ENCODE measurements at regions of chr5 and their contacts with region 1.

Region 1: GRCh38 chr5:78359831-78360673 is at the start of gene SCAMP1:
- DNase-seq: peak; percentile 92
- ATAC-seq: peak; percentile 92
- H3K4me3 Mint-ChIP-seq: peak within 1 kb of the TSS; percentile 81
- H3K27ac Mint-ChIP-seq: peak within 1 kb of the TSS; percentile 98
- H3K4me1 Mint-ChIP-seq: peaks cover 34% of the 10 kb centered on the region
- H3K27me3 Mint-ChIP-seq: no peaks in the 10 kb centered on the region
- CTCF ChIP-seq: no peak
- total RNA-seq, gene SCAMP1: 13.6 to 14.8 TPM

Region 2: DNA sequence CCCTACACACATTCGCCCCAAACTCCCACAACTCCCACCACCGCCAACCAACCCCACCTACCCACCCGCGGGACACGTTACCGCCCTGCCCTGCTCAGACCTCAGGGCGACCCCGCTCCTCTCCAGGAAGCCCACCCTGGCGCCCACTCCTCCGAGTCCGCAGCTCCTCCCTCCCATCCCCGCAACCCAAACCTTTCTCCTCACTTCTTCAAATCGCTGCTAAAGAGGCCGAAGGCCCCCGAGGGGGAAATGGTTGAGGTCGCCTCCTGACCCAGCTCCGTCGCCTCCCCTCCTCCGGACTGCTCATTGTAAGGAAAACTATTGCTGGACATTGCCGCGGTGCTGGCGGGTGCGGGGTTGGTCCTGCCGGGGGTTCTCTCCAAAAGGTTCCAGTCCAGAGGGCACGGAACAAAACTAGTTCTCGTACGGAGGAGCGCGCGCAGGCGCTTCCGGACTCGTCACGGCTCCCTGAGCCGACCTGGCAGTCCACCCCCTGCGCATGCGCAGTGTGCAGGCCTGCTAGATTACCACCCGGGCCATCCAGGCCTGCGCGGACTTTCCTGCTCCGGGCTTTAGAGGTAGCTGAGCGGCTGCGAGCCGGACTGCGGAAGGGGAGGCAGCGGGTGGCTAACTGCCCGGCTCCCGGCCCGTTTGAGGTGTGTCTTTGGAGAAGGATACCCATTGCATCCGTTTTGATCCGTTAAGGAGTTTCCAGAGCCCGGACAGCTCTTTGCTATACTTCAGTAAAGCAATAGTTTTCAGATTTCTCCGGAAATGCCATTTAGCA is 65.6 kb before region 1 on chr5 and contains the start of gene AP3B1:
- CTCF ChIA-PET with region 1: interaction called, 46 read pairs
- POLR2A ChIA-PET with region 1: interaction called, 38 read pairs
- intact Hi-C with region 1: loop called (anchors 1 kb)
- DNase-seq: peak; percentile 98
- ATAC-seq: peak; percentile 96
- H3K4me3 Mint-ChIP-seq: peak within 1 kb of the TSS; percentile 91
- H3K27ac Mint-ChIP-seq: peak within 1 kb of the TSS; percentile 99
- H3K4me1 Mint-ChIP-seq: peaks cover 32% of the 10 kb centered on the region
- H3K27me3 Mint-ChIP-seq: no peaks in the 10 kb centered on the region
- CTCF ChIP-seq: no peak
- total RNA-seq, gene AP3B1: 33.0 to 34.4 TPM

Measured in activated CD8-positive, alpha-beta T cell treated with anti-CD3 and anti-CD28 coated beads for 36 hours (primary cell).